ENCODE measurements at regions of chr1 and their contacts with region 1.

Region 1: DNA sequence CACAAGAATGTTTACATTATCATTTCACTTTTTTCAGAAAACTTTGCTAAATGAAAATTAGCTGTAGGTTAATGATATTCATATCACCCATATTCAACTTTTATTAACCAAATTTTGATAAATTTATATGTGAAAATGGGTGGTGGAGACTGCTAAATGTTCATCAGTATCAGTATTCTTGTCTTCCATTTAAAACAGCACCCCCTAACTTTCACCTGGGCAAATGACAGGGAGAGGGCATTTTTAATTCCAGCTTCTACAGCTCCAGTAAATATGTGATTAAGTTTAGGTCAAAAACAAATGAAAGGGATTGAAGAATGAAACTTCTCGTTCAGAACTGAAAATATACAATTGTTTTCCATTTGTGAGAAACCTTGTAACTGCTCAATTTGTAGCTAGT is 722.2 kb downstream of the KCNT2 start:
- DNase-seq: no peak
- H3K4me3 ChIP-seq: no peak overlapping the region
- H3K27ac ChIP-seq: no peak overlapping the region
- H3K4me1 ChIP-seq: no peaks in the 10 kb centered on the region
- H3K27me3 ChIP-seq: no peaks in the 10 kb centered on the region
- CTCF ChIP-seq: no peak
- POLR2A ChIP-seq: no peak

Region 2: GRCh38 chr1:194723067-194723466 is 1162.9 kb before region 1 on chr1:
- intact Hi-C with region 1: loop called (anchors 2 kb)
- DNase-seq: no peak
- H3K4me3 ChIP-seq: no peak overlapping the region
- H3K27ac ChIP-seq: no peak overlapping the region
- H3K4me1 ChIP-seq: no peaks in the 10 kb centered on the region
- H3K27me3 ChIP-seq: no peaks in the 10 kb centered on the region
- CTCF ChIP-seq: no peak
- POLR2A ChIP-seq: no peak

Region 3: GRCh38 chr1:195908121-195908520 is 22.1 kb after region 1 on chr1:
- intact Hi-C with region 1: no loop called
- DNase-seq: no peak
- H3K4me3 ChIP-seq: no peak overlapping the region
- H3K27ac ChIP-seq: no peak overlapping the region
- H3K4me1 ChIP-seq: no peaks in the 10 kb centered on the region
- H3K27me3 ChIP-seq: no peaks in the 10 kb centered on the region
- CTCF ChIP-seq: no peak
- POLR2A ChIP-seq: no peak

Measured in breast epithelium (tissue), 4 donors.